Right cardiac atrium (tissue), 5 donors: ENCODE measurements at regions of chr2 and their contacts with region 1.

Region 1: DNA sequence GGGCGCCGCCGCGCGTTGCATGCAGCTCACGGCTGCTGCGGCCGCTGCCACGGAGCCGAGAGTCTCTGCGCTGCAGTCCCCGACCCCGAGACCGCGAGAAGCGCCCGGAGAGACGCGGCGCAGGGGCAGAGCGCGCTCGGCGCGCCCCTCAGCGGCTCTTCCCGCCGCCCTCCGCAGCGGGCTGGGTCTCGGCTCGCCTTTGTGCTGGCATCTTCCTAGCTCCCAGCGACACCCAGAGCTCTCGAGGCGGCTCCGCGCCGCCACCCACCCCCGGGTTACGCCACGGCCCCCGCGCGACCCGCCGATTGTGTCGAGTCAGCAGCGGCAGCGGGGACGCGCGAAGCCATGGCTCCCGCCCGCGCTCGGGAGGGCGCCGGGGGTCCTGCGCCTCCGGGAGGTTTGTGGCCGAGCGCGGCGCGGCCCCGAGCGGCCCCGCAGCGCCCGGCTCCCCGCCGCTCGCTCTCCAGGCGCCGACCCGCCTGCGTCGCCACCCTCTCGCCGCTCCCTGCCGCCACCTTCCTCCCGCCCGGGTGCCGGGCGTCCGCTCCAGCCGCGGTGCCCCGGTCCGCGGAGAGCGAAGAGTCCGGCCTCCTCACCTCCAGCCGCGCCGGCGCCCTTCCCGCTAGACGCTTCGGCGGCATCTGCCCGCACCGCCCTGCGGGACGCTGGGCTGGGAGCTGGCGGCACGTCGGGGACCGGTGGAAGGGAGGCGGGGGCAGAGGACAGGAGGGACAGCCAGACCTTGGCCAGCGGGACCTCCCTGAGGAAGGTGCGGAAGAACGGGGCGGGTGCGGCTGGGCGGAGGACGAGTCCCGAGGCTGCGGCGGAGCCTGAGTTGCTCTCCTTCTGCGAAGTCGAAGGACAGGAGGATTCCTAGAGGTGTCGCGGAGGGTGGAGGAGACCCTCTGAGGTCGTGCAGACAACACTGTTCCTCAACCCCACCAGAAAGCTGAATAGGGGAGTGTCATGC is 46.3 kb upstream of the CCDC150 start:
- DNase-seq: peak; percentile 55 to 84 (median 83)
- ATAC-seq: peak; percentile 83 to 89
- H3K4me3 ChIP-seq: peak within 1 kb of the TSS; percentile 80
- H3K27ac ChIP-seq: peak within 1 kb of the TSS; percentile 31
- H3K4me1 ChIP-seq: no peaks in the 10 kb centered on the region
- H3K27me3 ChIP-seq: no peaks in the 10 kb centered on the region

Region 2: GRCh38 chr2:196291873-196292800 is 301.1 kb before region 1 on chr2:
- intact Hi-C with region 1: loop called in 1 of 4 experiments (anchors 10 kb)
- DNase-seq: no peak
- ATAC-seq: peak in 1 of 2 donors; percentile 7
- H3K4me3 ChIP-seq: no peak overlapping the region
- H3K27ac ChIP-seq: no peak overlapping the region
- H3K4me1 ChIP-seq: no peaks in the 10 kb centered on the region
- H3K27me3 ChIP-seq: no peaks in the 10 kb centered on the region

Region 3: DNA sequence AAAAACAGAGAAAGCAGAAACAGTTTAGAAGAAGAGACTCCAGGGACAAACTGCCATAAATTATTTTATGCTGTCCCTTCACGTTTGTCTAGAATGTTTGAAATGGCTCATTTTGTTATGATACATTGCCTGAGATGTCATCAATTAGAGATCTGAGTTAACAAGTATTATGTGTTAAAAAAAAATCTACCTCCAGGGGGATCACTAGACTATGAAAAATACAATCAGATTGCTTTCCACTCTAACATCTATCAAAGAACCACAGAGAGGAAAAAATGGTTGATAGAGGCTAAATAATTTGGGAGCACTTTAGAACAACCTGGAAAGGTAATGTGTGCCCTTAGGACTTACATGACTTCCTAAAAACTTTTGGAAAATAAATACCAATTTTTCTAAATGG is 57.5 kb before region 1 on chr2:
- intact Hi-C with region 1: loop called in 1 of 4 experiments (anchors 10 kb)
- DNase-seq: no peak
- ATAC-seq: no peak
- H3K4me3 ChIP-seq: no peak overlapping the region
- H3K27ac ChIP-seq: no peak overlapping the region
- H3K4me1 ChIP-seq: peaks cover 3% of the 10 kb centered on the region
- H3K27me3 ChIP-seq: no peaks in the 10 kb centered on the region

Region 4: DNA sequence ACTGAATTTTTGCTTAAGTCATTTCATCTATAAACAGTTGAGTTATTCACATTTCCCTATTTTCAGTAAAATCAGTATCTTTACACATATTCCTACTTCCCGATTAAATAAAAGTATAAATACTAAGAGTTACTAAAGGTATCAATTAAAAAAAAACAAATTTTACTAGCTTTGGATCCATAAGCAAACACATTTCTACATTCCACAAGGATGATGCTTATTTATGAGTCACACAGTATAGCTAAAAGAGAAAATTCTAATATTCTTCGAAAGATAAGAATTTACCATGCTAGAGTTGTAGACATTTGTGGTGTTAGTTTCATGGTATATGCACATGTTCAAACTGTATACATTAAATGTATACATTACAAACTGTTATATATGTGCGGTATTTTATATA is 309.6 kb after region 1 on chr2:
- intact Hi-C with region 1: no loop called
- DNase-seq: no peak
- ATAC-seq: no peak
- H3K4me3 ChIP-seq: no peak overlapping the region
- H3K27ac ChIP-seq: no peak overlapping the region
- H3K4me1 ChIP-seq: no peaks in the 10 kb centered on the region
- H3K27me3 ChIP-seq: no peaks in the 10 kb centered on the region